ENCODE measurements at regions of chr3 and their contacts with region 1.

Region 1: GRCh38 chr3:11803977-11804892 is 42.5 kb downstream of the TAMM41 start:
- DNase-seq: peak in 2 of 5 donors; percentile 53 to 57
- H3K4me3 ChIP-seq: no peak overlapping the region
- H3K27ac ChIP-seq: no peak overlapping the region
- H3K4me1 ChIP-seq: peaks cover 0 to 3% (median 0%) of the 10 kb centered on the region in 3 donors
- H3K27me3 ChIP-seq: no peaks in the 10 kb centered on the region
- CTCF ChIP-seq: peak; percentile 74

Region 2: GRCh38 chr3:11385891-11386290 is 418.3 kb before region 1 on chr3:
- intact Hi-C with region 1: loop called (anchors 10 kb)
- DNase-seq: peak in 1 of 5 donors; percentile 53
- H3K4me3 ChIP-seq: no peak overlapping the region
- H3K27ac ChIP-seq: no peak overlapping the region
- H3K4me1 ChIP-seq: peaks cover 0 to 11% (median 3%) of the 10 kb centered on the region in 3 donors
- H3K27me3 ChIP-seq: no peaks in the 10 kb centered on the region
- CTCF ChIP-seq: no peak

Region 3: DNA sequence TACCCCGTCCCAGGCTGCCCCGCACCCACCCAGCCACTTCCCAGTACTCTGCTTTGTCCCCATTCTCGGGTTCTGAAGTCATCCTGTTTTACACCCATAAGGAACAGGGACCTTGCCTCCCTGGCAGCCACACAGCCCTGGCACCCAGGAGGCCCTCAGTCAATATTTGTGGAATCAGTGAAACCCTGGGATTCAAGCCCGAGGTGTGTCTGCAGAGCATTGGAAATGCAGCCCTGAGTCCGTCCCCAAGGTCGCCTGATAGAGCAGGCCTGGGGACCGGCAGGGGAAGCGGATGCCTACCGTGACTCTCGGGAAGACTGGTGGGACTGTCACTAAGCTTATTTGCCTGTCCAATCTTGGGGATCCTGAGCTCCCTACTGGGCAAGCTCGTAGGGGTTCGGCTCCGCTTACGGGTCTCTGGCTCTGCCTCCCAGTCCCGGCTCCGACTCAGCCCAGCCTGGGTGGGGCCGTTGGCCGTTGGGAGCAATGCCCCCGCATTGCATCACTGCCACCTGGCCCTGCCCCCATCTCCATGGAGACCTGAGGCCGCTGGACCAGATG is 106.8 kb after region 1 on chr3:
- intact Hi-C with region 1: no loop called
- DNase-seq: peak in 1 of 5 donors; percentile 13
- H3K4me3 ChIP-seq: no peak overlapping the region
- H3K27ac ChIP-seq: no peak overlapping the region
- H3K4me1 ChIP-seq: no peaks in the 10 kb centered on the region
- H3K27me3 ChIP-seq: no peaks in the 10 kb centered on the region
- CTCF ChIP-seq: no peak

Region 4: GRCh38 chr3:12224181-12225147 is 420.2 kb after region 1 on chr3:
- intact Hi-C with region 1: no loop called
- DNase-seq: peak in 3 of 5 donors; percentile 15 to 41 (median 37)
- H3K4me3 ChIP-seq: no peak overlapping the region
- H3K27ac ChIP-seq: no peak overlapping the region
- H3K4me1 ChIP-seq: no peaks in the 10 kb centered on the region
- H3K27me3 ChIP-seq: no peaks in the 10 kb centered on the region
- CTCF ChIP-seq: no peak